Common myeloid progenitor, CD34-positive (primary cell): ENCODE measurements at regions of chr1 and their contacts with region 1.

Region 1: GRCh38 chr1:201261771-201262465 is 21.4 kb upstream of the PKP1 start:
- DNase-seq: no peak
- H3K4me3 ChIP-seq: no peak overlapping the region
- H3K27ac ChIP-seq: no peak overlapping the region
- H3K4me1 ChIP-seq: peaks cover 0 to 9% (median 4%) of the 10 kb centered on the region in 4 experiments
- H3K27me3 ChIP-seq: peaks cover 2 to 44% (median 13%) of the 10 kb centered on the region in 5 experiments

Region 2: DNA sequence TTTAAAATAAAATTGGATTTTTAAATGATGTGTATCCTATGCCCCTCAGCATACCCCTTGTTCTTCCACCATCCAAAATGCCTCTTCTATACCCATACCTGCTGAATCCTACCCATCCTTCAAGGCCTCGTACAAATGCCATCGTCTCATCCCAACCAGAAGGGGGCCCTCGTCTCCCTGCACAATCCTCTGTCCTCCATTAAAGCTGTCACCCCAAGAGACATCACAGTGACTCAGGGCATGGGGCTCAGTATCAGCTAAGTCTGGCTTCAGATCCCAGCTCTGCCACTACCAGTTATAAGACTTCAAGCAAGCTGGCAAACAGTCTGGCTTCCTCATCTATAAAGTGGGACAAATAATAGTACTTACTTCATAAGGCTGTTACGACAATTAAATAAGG is 47.5 kb before region 1 on chr1:
- CTCF ChIA-PET with region 1: no interaction called
- POLR2A ChIA-PET with region 1: no interaction called
- DNase-seq: peak in 2 of 3 donors; percentile 6 to 11
- H3K4me3 ChIP-seq: no peak overlapping the region
- H3K27ac ChIP-seq: no peak overlapping the region
- H3K4me1 ChIP-seq: no peaks in the 10 kb centered on the region
- H3K27me3 ChIP-seq: peaks cover 0 to 16% (median 4%) of the 10 kb centered on the region in 5 experiments

Region 3: DNA sequence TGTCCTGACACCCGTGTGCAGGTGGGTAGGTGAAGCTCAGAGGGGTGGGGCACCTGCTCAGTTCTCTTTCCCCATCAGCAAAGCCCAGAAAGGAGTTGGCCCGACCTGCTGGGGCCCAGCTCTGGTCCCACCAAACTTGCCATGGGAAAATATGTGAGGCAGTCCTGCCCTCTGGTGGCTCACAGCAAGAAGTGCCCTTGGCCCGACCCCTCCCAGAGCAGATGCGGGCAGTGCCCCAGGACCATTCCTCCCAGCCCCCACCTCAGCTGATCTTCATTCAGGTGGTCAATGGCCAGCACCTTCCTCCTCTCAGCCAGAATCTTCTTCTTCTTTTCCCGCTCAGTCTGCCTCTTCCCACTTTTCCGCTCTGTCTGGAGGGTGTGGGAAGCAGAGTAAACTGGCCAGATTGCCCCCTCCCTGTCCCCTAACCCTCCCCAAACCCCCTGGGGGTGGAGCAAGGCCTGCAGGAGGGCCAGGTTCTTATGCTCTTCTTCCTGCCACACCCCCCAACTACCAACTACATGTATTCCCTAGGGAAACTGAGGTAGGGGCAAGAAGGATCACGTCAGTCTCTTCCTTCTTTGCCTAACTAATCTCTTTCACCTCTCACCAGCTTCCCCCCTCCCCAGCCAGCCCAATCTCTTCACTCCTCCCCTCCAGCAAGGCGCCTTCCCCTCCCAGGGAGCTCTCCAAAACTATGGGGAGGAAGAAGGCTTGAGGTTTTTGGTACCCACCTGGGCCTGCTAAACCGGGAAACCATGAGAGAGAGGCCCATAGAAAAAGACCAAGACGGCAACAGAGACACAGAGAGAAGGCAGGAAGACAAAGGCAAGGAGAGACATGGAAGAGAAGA is 100.0 kb after region 1 on chr1:
- CTCF ChIA-PET with region 1: interaction called, 18 read pairs
- POLR2A ChIA-PET with region 1: no interaction called
- DNase-seq: peak; percentile 39 to 63 (median 57)
- H3K4me3 ChIP-seq: no peak overlapping the region
- H3K27ac ChIP-seq: no peak overlapping the region
- H3K4me1 ChIP-seq: no peaks in the 10 kb centered on the region
- H3K27me3 ChIP-seq: peaks cover 0 to 24% (median 5%) of the 10 kb centered on the region in 5 experiments